ENCODE measurements at regions of chr3 and their contacts with region 1.

Region 1: GRCh38 chr3:138915503-138916498 is 31.1 kb downstream of the FOXL2 start:
- DNase-seq: peak; percentile 91
- ATAC-seq: peak; percentile 93
- H3K4me3 Mint-ChIP-seq: peak overlapping the region; percentile 80
- H3K27ac Mint-ChIP-seq: peak overlapping the region; percentile 78
- H3K4me1 Mint-ChIP-seq: peaks cover 3% of the 10 kb centered on the region
- H3K27me3 Mint-ChIP-seq: peaks cover 4% of the 10 kb centered on the region
- CTCF ChIP-seq: peak; percentile 90

Region 2: DNA sequence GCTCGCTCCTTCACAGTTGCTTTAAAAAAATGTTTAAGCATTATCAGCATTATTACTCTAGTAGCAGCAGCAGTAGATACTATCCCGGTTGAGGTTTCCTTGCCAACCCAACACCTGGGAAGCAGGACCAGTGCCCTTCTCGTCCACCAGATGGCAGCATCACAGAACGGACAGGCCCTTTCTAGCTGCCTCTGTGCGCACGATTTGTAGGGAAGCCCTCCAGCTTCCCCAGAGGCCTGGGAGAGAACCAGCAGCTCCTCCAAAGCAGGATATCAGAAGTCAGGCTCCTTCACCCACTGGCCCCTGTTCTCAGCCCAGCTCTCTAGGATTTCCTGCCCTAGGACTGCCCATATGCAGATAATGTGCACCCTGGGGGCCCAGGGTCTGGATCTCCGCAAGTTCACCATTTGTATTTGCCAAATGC is 498.2 kb before region 1 on chr3:
- CTCF ChIA-PET with region 1: interaction called, 20 read pairs
- POLR2A ChIA-PET with region 1: no interaction called
- intact Hi-C with region 1: loop called (anchors 5 kb)
- DNase-seq: peak; percentile 77
- ATAC-seq: peak; percentile 87
- H3K4me3 Mint-ChIP-seq: no peak overlapping the region
- H3K27ac Mint-ChIP-seq: no peak overlapping the region
- H3K4me1 Mint-ChIP-seq: peaks cover 4% of the 10 kb centered on the region
- H3K27me3 Mint-ChIP-seq: peaks cover 5% of the 10 kb centered on the region
- CTCF ChIP-seq: peak; percentile 80

Region 3: GRCh38 chr3:138653567-138653966 is 262.2 kb before region 1 on chr3:
- CTCF ChIA-PET with region 1: interaction called, 12 read pairs
- POLR2A ChIA-PET with region 1: no interaction called
- intact Hi-C with region 1: no loop called
- DNase-seq: no peak
- ATAC-seq: no peak
- H3K4me3 Mint-ChIP-seq: no peak overlapping the region
- H3K27ac Mint-ChIP-seq: no peak overlapping the region
- H3K4me1 Mint-ChIP-seq: no peaks in the 10 kb centered on the region
- H3K27me3 Mint-ChIP-seq: no peaks in the 10 kb centered on the region
- CTCF ChIP-seq: no peak

Region 4: DNA sequence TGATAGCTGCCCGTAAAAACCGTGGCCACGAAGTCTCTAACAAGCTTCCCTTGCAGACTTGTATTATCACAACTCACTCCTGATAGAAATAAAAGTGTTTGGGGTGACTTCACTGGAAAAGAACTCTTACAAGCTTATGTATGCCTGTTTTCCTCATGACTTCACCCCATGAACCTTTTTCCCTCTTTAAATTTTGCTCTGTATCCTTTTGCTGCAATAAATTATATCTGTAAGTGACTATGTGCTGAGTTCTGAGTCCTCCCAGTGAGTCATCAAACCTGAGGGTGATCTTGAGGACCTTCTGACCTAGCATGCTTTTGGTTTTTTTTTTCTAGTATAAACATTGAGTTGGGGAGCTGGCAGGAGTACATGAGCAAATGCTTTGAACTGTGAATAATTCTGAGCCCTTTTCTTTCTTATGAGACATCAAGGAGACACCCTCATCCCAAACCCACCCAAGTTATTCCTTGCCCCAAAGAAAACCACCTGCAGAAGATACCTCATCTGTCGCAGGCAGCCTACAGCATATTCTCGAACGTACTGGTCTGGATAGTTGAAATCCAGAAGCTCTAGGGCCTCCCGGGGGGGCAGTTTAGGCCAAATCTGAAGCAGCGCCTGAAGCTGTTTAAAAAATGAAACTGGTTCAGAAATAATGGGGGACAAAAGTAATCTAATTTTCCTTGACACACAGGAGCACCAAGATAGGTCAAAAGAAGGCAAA is 221.4 kb before region 1 on chr3:
- CTCF ChIA-PET with region 1: interaction called, 347 read pairs
- POLR2A ChIA-PET with region 1: interaction called, 5 read pairs
- intact Hi-C with region 1: loop called (anchors 1 kb)
- DNase-seq: no peak
- ATAC-seq: no peak
- H3K4me3 Mint-ChIP-seq: no peak overlapping the region
- H3K27ac Mint-ChIP-seq: no peak overlapping the region
- H3K4me1 Mint-ChIP-seq: no peaks in the 10 kb centered on the region
- H3K27me3 Mint-ChIP-seq: no peaks in the 10 kb centered on the region
- CTCF ChIP-seq: no peak

Region 5: GRCh38 chr3:138834359-138835212 is 81.2 kb before region 1 on chr3 and contains the start of gene PIK3CB:
- CTCF ChIA-PET with region 1: interaction called, 10 read pairs
- POLR2A ChIA-PET with region 1: no interaction called
- intact Hi-C with region 1: no loop called
- DNase-seq: peak; percentile 88
- ATAC-seq: peak; percentile 93
- H3K4me3 Mint-ChIP-seq: peak within 1 kb of the TSS; percentile 84
- H3K27ac Mint-ChIP-seq: peak within 1 kb of the TSS; percentile 93
- H3K4me1 Mint-ChIP-seq: peaks cover 22% of the 10 kb centered on the region
- H3K27me3 Mint-ChIP-seq: no peaks in the 10 kb centered on the region
- CTCF ChIP-seq: peak; percentile 41
- total RNA-seq, gene PIK3CB: 12.4 to 13.4 TPM

Region 6: GRCh38 chr3:138898301-138898700 is 17.5 kb before region 1 on chr3:
- CTCF ChIA-PET with region 1: interaction called, 46 read pairs
- POLR2A ChIA-PET with region 1: no interaction called
- intact Hi-C with region 1: no loop called
- DNase-seq: no peak
- ATAC-seq: no peak
- H3K4me3 Mint-ChIP-seq: no peak overlapping the region
- H3K27ac Mint-ChIP-seq: no peak overlapping the region
- H3K4me1 Mint-ChIP-seq: no peaks in the 10 kb centered on the region
- H3K27me3 Mint-ChIP-seq: no peaks in the 10 kb centered on the region
- CTCF ChIP-seq: no peak

Region 7: GRCh38 chr3:139016430-139017048 is 100.7 kb after region 1 on chr3:
- CTCF ChIA-PET with region 1: no interaction called
- POLR2A ChIA-PET with region 1: no interaction called
- intact Hi-C with region 1: no loop called
- DNase-seq: no peak
- ATAC-seq: no peak
- H3K4me3 Mint-ChIP-seq: no peak overlapping the region
- H3K27ac Mint-ChIP-seq: no peak overlapping the region
- H3K4me1 Mint-ChIP-seq: no peaks in the 10 kb centered on the region
- H3K27me3 Mint-ChIP-seq: peaks cover 2% of the 10 kb centered on the region
- CTCF ChIP-seq: no peak

Region 8: GRCh38 chr3:139202226-139202958 is 286.6 kb after region 1 on chr3:
- CTCF ChIA-PET with region 1: no interaction called
- POLR2A ChIA-PET with region 1: no interaction called
- intact Hi-C with region 1: no loop called
- DNase-seq: peak; percentile 46
- ATAC-seq: peak; percentile 30
- H3K4me3 Mint-ChIP-seq: no peak overlapping the region
- H3K27ac Mint-ChIP-seq: no peak overlapping the region
- H3K4me1 Mint-ChIP-seq: no peaks in the 10 kb centered on the region
- H3K27me3 Mint-ChIP-seq: peaks cover 5% of the 10 kb centered on the region
- CTCF ChIP-seq: no peak

Measured in activated CD8-positive, alpha-beta T cell treated with anti-CD3 and anti-CD28 coated beads for 36 hours (primary cell).